ENCODE measurements at regions of chr11 and their contacts with region 1.

Region 1: GRCh38 chr11:65569973-65570918 is at the start of gene ZNRD2:
- DNase-seq: peak; percentile 99
- ATAC-seq: peak; percentile 67
- H3K4me3 ChIP-seq: peak within 1 kb of the TSS; percentile 58 to 89 (median 83)
- H3K4me3 Mint-ChIP-seq: peak within 1 kb of the TSS; percentile 99
- H3K27ac ChIP-seq: peak within 1 kb of the TSS; percentile 96 to 97
- H3K27ac Mint-ChIP-seq: peak within 1 kb of the TSS; percentile 99
- H3K4me1 ChIP-seq: peaks cover 58 to 77% of the 10 kb centered on the region in 2 donors
- H3K4me1 Mint-ChIP-seq: peaks cover 75% of the 10 kb centered on the region
- H3K27me3 ChIP-seq: no peaks in the 10 kb centered on the region
- H3K27me3 Mint-ChIP-seq: no peaks in the 10 kb centered on the region
- CTCF ChIP-seq: peak; percentile 48
- total RNA-seq, gene ZNRD2: 22.1 and 24.0 TPM in 2 replicates

Region 2: GRCh38 chr11:65117216-65118096 is 452.8 kb before region 1 on chr11 and contains the start of gene ZNHIT2:
- CTCF ChIA-PET with region 1: no interaction called
- POLR2A ChIA-PET with region 1: no interaction called
- intact Hi-C with region 1: loop called (anchors 1 kb)
- DNase-seq: peak; percentile 100
- ATAC-seq: peak; percentile 74
- H3K4me3 ChIP-seq: peak within 1 kb of the TSS; percentile 0 to 80 (median 80)
- H3K4me3 Mint-ChIP-seq: peak within 1 kb of the TSS; percentile 91
- H3K27ac ChIP-seq: peak within 1 kb of the TSS; percentile 69 to 96
- H3K27ac Mint-ChIP-seq: peak within 1 kb of the TSS; percentile 91
- H3K4me1 ChIP-seq: peaks cover 38 to 60% of the 10 kb centered on the region in 2 donors
- H3K4me1 Mint-ChIP-seq: peaks cover 71% of the 10 kb centered on the region
- H3K27me3 ChIP-seq: no peaks in the 10 kb centered on the region
- H3K27me3 Mint-ChIP-seq: no peaks in the 10 kb centered on the region
- CTCF ChIP-seq: peak; percentile 92
- total RNA-seq, gene ZNHIT2: 14.1 and 14.5 TPM in 2 replicates

Region 3: GRCh38 chr11:65354265-65355012 is 215.8 kb before region 1 on chr11 and contains the start of gene TIGD3:
- CTCF ChIA-PET with region 1: no interaction called
- POLR2A ChIA-PET with region 1: no interaction called
- intact Hi-C with region 1: no loop called
- DNase-seq: peak; percentile 97
- ATAC-seq: peak; percentile 96
- H3K4me3 ChIP-seq: peak within 1 kb of the TSS; percentile 26 to 79 (median 65)
- H3K4me3 Mint-ChIP-seq: peak within 1 kb of the TSS; percentile 95
- H3K27ac ChIP-seq: peak within 1 kb of the TSS in 1 of 2 donors; percentile 18
- H3K27ac Mint-ChIP-seq: peak within 1 kb of the TSS; percentile 92
- H3K4me1 ChIP-seq: peaks cover 11 to 16% of the 10 kb centered on the region in 2 donors
- H3K4me1 Mint-ChIP-seq: peaks cover 20% of the 10 kb centered on the region
- H3K27me3 ChIP-seq: no peaks in the 10 kb centered on the region
- H3K27me3 Mint-ChIP-seq: no peaks in the 10 kb centered on the region
- CTCF ChIP-seq: no peak
- total RNA-seq, gene TIGD3: 6.1 and 7.5 TPM in 2 replicates

Region 4: DNA sequence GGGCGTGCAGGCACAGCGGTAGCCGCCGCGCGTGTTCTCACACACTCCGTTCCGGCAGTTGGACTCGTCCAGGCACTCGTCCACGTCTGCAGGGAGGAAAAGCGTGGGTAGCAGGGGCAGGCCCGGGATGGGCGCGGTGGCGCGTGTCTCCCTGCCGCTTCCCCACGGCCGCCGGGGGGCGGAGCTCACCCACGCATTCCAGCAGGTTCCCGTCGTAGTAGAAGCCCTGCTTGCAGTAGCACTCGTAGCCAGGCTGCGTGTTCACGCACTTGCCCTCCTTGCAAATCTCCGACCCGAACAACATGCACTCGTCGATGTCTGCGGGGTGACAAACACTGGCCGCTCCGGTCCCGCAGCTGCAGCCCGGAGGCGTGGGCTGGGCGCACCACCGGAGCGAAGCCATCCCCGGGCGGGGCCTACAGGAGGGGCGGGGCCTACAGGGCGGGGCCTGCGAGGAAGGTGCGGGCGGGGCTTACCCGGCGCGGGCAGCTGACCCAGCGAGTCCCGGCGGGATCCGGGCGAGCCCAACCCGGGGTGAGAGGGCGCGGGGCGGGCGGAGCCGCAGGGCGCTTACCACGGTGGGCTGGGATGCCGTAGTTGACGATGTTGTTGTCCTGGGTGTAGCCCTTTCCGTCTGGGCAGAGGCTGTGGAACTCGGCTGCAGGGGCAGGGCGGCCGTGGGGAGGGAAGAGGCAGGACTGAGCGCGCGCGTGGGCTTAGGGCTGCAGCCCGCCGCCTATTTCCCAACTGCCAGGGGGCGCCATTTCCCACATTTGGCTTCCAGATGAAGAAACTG is 29.8 kb before region 1 on chr11:
- CTCF ChIA-PET with region 1: interaction called, 86 read pairs
- POLR2A ChIA-PET with region 1: interaction called, 53 read pairs
- intact Hi-C with region 1: loop called (anchors 1 kb)
- DNase-seq: peak; percentile 97
- ATAC-seq: peak; percentile 87
- H3K4me3 ChIP-seq: peak overlapping the region; percentile 74 to 97 (median 86)
- H3K4me3 Mint-ChIP-seq: peak overlapping the region; percentile 95
- H3K27ac ChIP-seq: peak overlapping the region; percentile 85 to 87
- H3K27ac Mint-ChIP-seq: peak overlapping the region; percentile 96
- H3K4me1 ChIP-seq: peaks cover 12 to 17% of the 10 kb centered on the region in 2 donors
- H3K4me1 Mint-ChIP-seq: peaks cover 24% of the 10 kb centered on the region
- H3K27me3 ChIP-seq: no peaks in the 10 kb centered on the region
- H3K27me3 Mint-ChIP-seq: no peaks in the 10 kb centered on the region
- CTCF ChIP-seq: peak; percentile 63

Region 5: DNA sequence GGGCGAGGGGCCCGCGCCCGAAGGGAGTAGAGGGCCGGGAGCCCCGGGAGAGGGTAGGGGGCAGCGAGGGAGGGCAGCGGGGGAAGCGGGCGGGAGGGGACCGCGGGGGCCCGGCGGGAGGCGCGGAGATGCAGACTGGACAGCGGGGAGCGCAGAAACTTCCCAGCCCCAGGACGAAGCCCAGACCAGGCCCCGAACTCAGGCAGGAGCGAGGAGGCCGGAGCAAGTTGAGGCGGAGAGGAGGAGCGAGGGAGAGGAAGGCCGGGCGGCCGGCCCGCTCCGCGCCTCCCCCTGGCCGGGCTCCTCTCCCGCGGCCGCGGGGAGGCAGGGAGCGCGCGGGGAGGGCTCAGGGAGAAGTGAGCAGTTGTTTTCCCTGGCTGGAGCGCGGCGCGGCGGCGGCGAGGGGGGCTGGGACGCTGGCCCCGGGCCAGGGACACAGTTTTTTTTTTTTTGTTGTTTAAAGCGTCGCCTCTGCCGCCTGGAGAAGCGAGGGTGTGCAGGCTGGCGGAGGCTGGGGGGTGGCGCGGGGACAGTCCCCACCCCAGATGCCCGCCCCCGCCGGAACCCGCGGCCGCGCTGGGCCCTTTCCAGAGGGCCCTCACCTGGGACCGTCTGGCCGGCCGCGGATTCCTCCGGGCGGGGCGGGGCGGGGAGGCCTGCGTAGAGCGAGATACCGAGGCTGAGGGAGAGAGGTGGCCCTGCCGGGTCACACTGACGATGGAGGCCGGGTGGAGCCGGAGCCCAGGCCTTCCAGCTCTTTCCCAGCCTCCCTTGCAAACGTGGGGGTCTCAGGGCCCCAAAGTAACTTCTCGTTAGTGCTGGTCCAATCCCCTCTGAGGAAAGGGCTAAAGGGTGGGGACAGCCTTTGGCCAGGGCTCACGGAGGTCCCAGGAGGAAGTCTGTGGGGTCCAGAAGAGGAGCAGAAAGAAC is 12.0 kb before region 1 on chr11 and contains the start of gene LTBP3:
- CTCF ChIA-PET with region 1: interaction called, 10 read pairs
- POLR2A ChIA-PET with region 1: interaction called, 7 read pairs
- intact Hi-C with region 1: loop called (anchors 1 kb)
- DNase-seq: peak; percentile 52
- ATAC-seq: peak; percentile 60
- H3K4me3 ChIP-seq: peak within 1 kb of the TSS; percentile 22 to 62 (median 54)
- H3K4me3 Mint-ChIP-seq: peak within 1 kb of the TSS; percentile 81
- H3K27ac ChIP-seq: peak within 1 kb of the TSS; percentile 57 to 62
- H3K27ac Mint-ChIP-seq: peak within 1 kb of the TSS; percentile 68
- H3K4me1 ChIP-seq: peaks cover 11 to 33% of the 10 kb centered on the region in 2 donors
- H3K4me1 Mint-ChIP-seq: peaks cover 28% of the 10 kb centered on the region
- H3K27me3 ChIP-seq: no peaks in the 10 kb centered on the region
- H3K27me3 Mint-ChIP-seq: peaks cover 3% of the 10 kb centered on the region
- CTCF ChIP-seq: no peak
- total RNA-seq, gene LTBP3: 69.0 and 69.7 TPM in 2 replicates

Region 6: GRCh38 chr11:65652511-65653231 is 82.4 kb after region 1 on chr11:
- CTCF ChIA-PET with region 1: no interaction called
- POLR2A ChIA-PET with region 1: no interaction called
- intact Hi-C with region 1: loop called (anchors 1 kb)
- DNase-seq: peak; percentile 98
- ATAC-seq: peak; percentile 89
- H3K4me3 ChIP-seq: peak overlapping the region; percentile 22 to 74 (median 69)
- H3K4me3 Mint-ChIP-seq: peak overlapping the region; percentile 96
- H3K27ac ChIP-seq: peak overlapping the region; percentile 90 to 93
- H3K27ac Mint-ChIP-seq: peak overlapping the region; percentile 98
- H3K4me1 ChIP-seq: peaks cover 22 to 44% of the 10 kb centered on the region in 2 donors
- H3K4me1 Mint-ChIP-seq: peaks cover 57% of the 10 kb centered on the region
- H3K27me3 ChIP-seq: no peaks in the 10 kb centered on the region
- H3K27me3 Mint-ChIP-seq: no peaks in the 10 kb centered on the region
- CTCF ChIP-seq: no peak

Region 7: DNA sequence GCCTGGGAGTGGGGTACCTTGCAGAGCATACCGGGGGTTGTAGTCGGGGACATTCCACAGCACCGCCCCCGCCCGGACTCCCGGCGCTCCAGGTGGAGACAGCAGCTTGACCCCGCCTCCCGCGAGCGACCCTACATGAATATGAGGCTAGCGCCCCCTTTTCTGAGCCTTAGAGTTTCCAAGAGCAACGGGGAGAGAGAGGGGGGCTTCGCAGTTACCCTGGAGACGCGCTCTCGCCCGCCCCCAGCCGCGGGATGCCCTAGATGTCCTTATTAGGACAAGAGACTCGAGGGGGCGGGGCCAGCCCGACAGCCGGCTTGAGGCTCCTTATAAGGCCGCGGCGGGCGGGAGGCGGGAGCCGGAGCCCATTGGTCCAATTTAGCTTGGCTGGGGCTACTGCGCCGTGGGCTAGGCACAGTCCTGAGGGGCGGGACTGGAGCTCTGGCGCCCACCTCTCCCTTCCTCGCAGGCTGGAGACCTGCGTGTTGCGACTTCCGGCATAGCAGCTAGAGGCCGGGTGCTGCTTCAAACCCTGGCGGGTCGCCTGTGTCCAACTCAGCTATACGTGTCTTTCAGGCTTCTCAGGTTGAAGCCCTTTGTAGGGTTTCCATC is 289.1 kb after region 1 on chr11:
- CTCF ChIA-PET with region 1: interaction called, 3 read pairs
- POLR2A ChIA-PET with region 1: interaction called, 4 read pairs
- intact Hi-C with region 1: loop called (anchors 2 kb)
- DNase-seq: peak; percentile 97
- ATAC-seq: peak; percentile 62
- H3K4me3 ChIP-seq: peak overlapping the region; percentile 81 to 98 (median 95)
- H3K4me3 Mint-ChIP-seq: peak overlapping the region; percentile 92
- H3K27ac ChIP-seq: peak overlapping the region; percentile 77 to 89
- H3K27ac Mint-ChIP-seq: peak overlapping the region; percentile 98
- H3K4me1 ChIP-seq: peaks cover 27 to 54% of the 10 kb centered on the region in 2 donors
- H3K4me1 Mint-ChIP-seq: peaks cover 47% of the 10 kb centered on the region
- H3K27me3 ChIP-seq: no peaks in the 10 kb centered on the region
- H3K27me3 Mint-ChIP-seq: no peaks in the 10 kb centered on the region
- CTCF ChIP-seq: no peak